SK-N-SH (cell line): ENCODE measurements at regions of chr3 and their contacts with region 1.

Region 1: GRCh38 chr3:156151824-156152428 is 31.5 kb downstream of the KCNAB1 start:
- DNase-seq: peak; percentile 68
- H3K4me3 ChIP-seq: no peak overlapping the region; a peak in 1 of 4 replicates
- H3K27ac ChIP-seq: peak overlapping the region in 1 of 2 experiments; percentile 34; a peak in 2 of 4 replicates
- H3K4me1 ChIP-seq: peaks cover 0 to 8% of the 10 kb centered on the region in 2 experiments; a peak in 1 of 4 replicates
- H3K27me3 ChIP-seq: no peaks in the 10 kb centered on the region
- CTCF ChIP-seq: peak; percentile 92
- EP300 ChIP-seq: 0 out of 4 replicates have a peak, but pooled peaks of 1 of the 2 experiments have one; percentile 26
- RAD21 ChIP-seq: peak; percentile 99

Region 2: GRCh38 chr3:156132313-156132712 is 19.6 kb before region 1 on chr3:
- CTCF ChIA-PET with region 1: interaction called, 37 read pairs
- POLR2A ChIA-PET with region 1: no interaction called
- DNase-seq: no peak
- H3K4me3 ChIP-seq: no peak overlapping the region
- H3K27ac ChIP-seq: no peak overlapping the region
- H3K4me1 ChIP-seq: peaks cover 0 to 2% of the 10 kb centered on the region in 2 experiments; a peak in 1 of 4 replicates
- H3K27me3 ChIP-seq: no peaks in the 10 kb centered on the region; the same call in 1 of the 2 replicates
- CTCF ChIP-seq: no peak
- EP300 ChIP-seq: no peak
- RAD21 ChIP-seq: no peak

Region 3: DNA sequence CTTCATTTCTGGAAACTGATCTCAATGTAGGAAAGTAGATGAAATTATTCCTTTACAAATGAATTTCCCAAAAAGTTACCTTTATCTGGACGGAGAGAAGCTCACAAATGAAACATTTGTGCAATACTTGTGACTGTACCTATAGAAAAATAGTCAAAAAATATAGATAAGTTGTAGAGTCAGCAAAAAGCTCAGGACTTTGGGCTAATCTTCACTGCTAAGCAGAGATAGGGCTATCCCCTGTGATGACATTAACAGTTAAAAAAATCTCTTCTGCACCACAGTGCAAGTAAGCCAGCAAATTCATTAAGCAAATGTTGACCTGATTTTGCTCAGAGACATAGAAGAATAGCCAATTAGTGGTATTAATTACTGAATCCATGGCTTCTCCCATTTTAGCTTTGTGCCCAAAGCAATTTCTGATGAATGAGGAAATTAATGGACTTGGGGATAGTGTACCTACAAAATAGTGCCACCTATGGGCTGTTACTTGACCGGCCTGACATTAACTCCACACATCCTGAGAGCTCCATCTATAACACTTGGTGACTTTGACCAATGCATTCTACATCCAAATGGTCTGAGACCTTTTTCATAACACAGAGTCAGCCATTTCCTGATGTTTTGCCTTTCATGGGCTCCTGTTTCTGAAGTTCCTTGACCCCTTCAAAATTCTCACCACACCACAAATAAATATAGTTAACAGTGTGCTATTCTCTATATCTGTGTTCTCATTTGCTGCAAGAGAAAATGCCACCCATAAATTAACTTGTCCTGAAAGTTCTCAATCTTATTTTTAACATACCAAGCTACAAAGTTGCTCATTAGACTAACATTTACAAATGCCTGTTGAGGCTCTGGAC is 298.0 kb after region 1 on chr3:
- CTCF ChIA-PET with region 1: interaction called, 95 read pairs
- POLR2A ChIA-PET with region 1: no interaction called
- DNase-seq: peak; percentile 42
- H3K4me3 ChIP-seq: no peak overlapping the region
- H3K27ac ChIP-seq: no peak overlapping the region
- H3K4me1 ChIP-seq: peaks cover 2 to 9% of the 10 kb centered on the region in 2 experiments
- H3K27me3 ChIP-seq: no peaks in the 10 kb centered on the region
- CTCF ChIP-seq: peak; percentile 68
- EP300 ChIP-seq: no peak
- RAD21 ChIP-seq: peak; percentile 77

Region 4: DNA sequence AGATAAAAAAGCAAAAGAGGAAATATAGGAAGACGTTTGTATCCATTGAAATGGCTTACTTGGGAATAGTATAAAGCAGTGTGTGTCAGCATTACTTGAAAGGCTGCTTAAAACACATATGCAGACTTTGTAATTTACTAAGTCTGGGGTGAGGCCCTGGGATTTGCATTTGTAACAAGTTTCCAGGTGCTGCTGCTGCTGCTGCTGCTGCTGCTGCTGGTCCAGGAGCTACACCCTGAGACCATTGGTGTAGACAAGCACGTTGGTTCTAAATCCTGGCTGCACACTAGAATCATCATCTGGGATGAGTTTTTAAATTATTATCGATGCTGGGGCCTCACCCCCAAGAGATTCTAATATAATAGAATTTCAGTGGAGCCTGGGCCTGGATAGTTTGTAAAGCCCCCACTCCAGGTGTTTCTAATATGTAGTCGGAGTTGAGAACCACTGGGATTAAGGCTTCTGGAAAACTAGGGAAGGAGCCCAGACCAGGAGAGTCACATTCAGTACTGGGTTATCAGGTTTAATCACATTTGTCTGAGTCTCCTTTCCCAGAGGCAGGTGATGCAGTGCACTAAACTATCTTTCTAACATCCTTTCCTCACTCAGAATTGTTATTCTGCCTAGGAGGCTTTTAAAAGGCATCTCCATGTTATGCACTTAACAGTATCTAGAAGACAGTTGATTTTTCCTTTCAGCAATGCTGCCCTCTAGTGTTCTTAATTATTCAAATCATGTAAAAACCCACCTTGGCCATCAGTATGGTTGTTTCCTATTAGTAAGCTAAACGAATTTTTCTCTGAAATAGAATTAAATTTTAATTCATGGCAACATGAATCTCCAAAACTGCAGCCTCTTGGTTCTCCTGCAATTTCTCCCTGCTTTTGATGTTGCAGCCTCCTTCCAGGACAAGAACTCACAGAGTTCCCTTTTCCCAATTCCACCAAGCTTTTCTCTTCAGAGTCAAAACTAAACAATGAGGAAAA is 357.6 kb after region 1 on chr3:
- CTCF ChIA-PET with region 1: interaction called, 376 read pairs
- POLR2A ChIA-PET with region 1: no interaction called
- DNase-seq: peak; percentile 63
- H3K4me3 ChIP-seq: no peak overlapping the region; a peak in 1 of 4 replicates
- H3K27ac ChIP-seq: peak overlapping the region in 1 of 2 experiments; percentile 66; a peak in 2 of 4 replicates
- H3K4me1 ChIP-seq: peaks cover 5 to 9% of the 10 kb centered on the region in 2 experiments; a peak in 3 of 4 replicates
- H3K27me3 ChIP-seq: no peaks in the 10 kb centered on the region
- CTCF ChIP-seq: peak; percentile 74
- EP300 ChIP-seq: no peak
- RAD21 ChIP-seq: peak; percentile 85

Region 5: DNA sequence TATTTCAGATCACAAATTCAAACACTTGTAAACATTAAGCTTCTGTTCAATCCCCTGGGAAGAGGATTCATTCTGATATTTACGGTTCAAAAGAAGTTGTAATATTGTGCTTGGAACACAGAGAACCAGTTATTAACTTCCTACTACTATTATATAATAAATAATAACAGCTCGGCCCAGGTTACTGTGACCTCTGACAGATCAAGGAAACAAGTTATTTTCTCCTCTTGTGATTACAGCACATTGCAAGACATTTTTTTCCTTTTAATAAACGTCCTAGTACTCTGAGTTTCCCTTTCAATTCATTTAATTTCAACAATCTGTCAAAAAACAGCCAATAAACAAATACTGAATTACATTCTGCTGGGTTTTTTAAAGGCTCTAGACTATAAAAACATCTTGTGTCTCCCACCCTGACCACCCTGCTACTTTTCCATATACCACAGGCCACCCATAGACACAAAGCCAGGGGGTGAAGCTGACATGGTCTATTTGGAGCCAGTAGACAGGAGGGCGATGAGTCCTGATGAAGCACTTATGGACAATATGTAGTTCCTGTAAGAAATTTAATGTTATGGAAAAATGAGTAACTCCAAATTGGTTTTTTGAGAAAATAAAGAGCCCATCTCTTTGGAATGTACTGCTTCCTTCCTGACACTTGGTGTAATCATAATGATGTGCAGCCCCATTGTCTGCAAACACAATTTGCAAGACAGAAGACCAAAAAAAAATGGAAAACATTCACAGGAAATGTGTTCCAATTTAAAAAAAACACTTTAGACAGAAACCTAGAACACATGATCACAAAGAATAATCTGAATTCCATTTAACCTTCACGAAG is 391.0 kb after region 1 on chr3:
- CTCF ChIA-PET with region 1: interaction called, 21 read pairs
- POLR2A ChIA-PET with region 1: interaction called, 3 read pairs
- DNase-seq: no peak
- H3K4me3 ChIP-seq: no peak overlapping the region
- H3K27ac ChIP-seq: peak overlapping the region; percentile 72 to 93
- H3K4me1 ChIP-seq: peaks cover 0 to 60% of the 10 kb centered on the region in 2 experiments; a peak in 3 of 4 replicates
- H3K27me3 ChIP-seq: no peaks in the 10 kb centered on the region
- CTCF ChIP-seq: no peak
- EP300 ChIP-seq: no peak
- RAD21 ChIP-seq: no peak

Region 6: GRCh38 chr3:157081681-157082210 is 929.8 kb after region 1 on chr3:
- CTCF ChIA-PET with region 1: interaction called, 33 read pairs
- POLR2A ChIA-PET with region 1: no interaction called
- DNase-seq: peak; percentile 84
- H3K4me3 ChIP-seq: no peak overlapping the region; a peak in 1 of 4 replicates
- H3K27ac ChIP-seq: peak overlapping the region; percentile 43 to 58; a peak in 2 of 4 replicates
- H3K4me1 ChIP-seq: peaks cover 18 to 27% of the 10 kb centered on the region in 2 experiments; a peak in 3 of 4 replicates
- H3K27me3 ChIP-seq: no peaks in the 10 kb centered on the region
- CTCF ChIP-seq: peak; percentile 96
- EP300 ChIP-seq: no peak
- RAD21 ChIP-seq: peak; percentile 98